ENCODE measurements at regions of chr2 and their contacts with region 1.

Region 1: DNA sequence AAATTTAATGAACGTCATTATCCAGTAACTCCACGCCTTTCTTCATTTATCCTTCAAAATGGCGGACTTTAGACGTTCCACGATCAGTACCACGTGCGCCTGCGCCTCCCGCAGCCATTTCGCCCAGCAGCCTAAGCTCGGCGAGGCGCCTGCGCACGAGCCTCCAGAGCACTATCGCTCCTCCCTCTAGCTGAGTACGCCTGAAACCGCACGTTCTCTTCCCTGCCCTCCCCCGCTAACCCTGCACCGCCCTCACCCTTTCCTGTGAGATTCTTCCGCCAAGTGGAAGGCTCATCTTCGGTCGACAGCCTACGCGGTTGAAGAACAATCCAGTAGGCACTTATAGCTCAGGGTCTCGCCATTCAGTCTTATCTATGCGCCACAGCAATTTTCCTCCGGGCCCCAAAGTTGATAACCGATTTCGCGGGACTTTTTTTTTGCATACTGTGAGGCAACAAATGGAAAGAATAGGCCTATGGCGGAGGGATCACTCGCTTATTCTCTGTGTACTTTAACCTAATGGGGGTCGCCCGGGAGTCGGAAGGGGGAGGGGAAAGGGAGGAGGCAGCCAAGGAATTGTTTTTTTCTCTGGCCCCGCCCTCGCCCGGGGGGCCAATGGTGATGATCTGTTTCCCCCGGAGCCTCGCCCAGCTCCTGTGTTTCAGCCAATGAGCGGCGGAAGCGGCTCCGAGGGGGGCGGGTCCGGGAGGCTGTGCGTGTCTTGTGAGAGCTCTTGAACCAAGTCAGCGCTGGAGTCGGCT is at the start of gene KDM3A:
- DNase-seq: peak; percentile 99 to 100 (median 99)
- H3K4me3 ChIP-seq: peak within 1 kb of the TSS; percentile 94 to 95
- H3K4me3 Mint-ChIP-seq: peak within 1 kb of the TSS; percentile 95 to 99 (median 98)
- H3K27ac ChIP-seq: peak within 1 kb of the TSS; percentile 83
- H3K27ac Mint-ChIP-seq: peak within 1 kb of the TSS; percentile 98 to 100 (median 99)
- H3K4me1 ChIP-seq: peaks cover 37% of the 10 kb centered on the region
- H3K4me1 Mint-ChIP-seq: peaks cover 37 to 51% (median 45%) of the 10 kb centered on the region in 4 donors
- H3K27me3 ChIP-seq: no peaks in the 10 kb centered on the region
- H3K27me3 Mint-ChIP-seq: peaks cover 2 to 9% of the 10 kb centered on the region in 2 donors
- total RNA-seq, gene KDM3A: 158 to 164 TPM

Region 2: DNA sequence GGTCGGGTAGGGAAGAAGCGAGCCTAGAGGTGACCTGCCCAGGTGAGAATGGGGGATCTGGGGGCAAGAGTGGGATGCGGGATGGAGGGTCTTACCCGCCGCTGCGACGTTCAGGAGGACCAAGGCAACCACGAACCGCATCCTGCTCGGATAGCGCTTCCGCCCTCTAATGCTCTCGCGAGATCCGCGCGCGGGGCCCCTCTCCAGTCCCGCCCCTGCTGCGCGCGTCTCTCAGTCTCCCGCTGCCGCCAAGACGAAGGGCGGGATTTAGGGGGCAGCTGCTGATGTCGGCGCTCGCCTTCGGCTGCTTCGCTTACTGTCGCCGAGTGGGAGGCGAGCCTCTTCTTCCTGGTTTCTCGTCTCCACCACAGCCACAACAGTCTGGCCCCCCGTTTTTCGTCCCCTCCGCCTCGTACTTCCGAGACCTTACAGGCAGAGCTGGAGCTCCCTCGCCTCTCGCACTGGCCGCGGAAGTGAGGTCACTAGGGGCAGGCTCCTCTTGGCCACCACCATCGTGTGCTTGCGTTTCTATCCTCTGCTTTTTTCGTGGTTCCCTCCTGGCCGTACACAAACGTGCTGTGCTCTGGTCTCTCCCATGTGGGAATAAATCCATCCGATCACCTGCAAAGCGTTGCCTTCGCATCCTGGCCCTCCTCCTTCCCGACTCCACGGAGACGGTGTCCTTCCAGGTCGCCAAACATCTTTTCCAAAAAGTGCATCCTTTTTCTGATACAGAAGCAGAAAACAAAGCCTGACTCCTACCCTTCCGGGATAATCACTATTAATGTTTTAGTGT is 1112.8 kb before region 1 on chr2 and contains the start of gene TGOLN2:
- CTCF ChIA-PET with region 1: no interaction called
- POLR2A ChIA-PET with region 1: interaction called, 11 read pairs
- intact Hi-C with region 1: loop called (anchors 2 kb)
- DNase-seq: peak; percentile 93 to 96 (median 95)
- H3K4me3 ChIP-seq: peak within 1 kb of the TSS; percentile 99 to 100
- H3K4me3 Mint-ChIP-seq: peak within 1 kb of the TSS; percentile 92 to 100 (median 98)
- H3K27ac ChIP-seq: peak within 1 kb of the TSS; percentile 98
- H3K27ac Mint-ChIP-seq: peak within 1 kb of the TSS; percentile 97 to 100 (median 100)
- H3K4me1 ChIP-seq: peaks cover 44% of the 10 kb centered on the region
- H3K4me1 Mint-ChIP-seq: peaks cover 21 to 65% (median 34%) of the 10 kb centered on the region in 4 donors
- H3K27me3 ChIP-seq: no peaks in the 10 kb centered on the region
- H3K27me3 Mint-ChIP-seq: no peaks in the 10 kb centered on the region
- total RNA-seq, gene TGOLN2: 188 to 195 TPM

Region 3: DNA sequence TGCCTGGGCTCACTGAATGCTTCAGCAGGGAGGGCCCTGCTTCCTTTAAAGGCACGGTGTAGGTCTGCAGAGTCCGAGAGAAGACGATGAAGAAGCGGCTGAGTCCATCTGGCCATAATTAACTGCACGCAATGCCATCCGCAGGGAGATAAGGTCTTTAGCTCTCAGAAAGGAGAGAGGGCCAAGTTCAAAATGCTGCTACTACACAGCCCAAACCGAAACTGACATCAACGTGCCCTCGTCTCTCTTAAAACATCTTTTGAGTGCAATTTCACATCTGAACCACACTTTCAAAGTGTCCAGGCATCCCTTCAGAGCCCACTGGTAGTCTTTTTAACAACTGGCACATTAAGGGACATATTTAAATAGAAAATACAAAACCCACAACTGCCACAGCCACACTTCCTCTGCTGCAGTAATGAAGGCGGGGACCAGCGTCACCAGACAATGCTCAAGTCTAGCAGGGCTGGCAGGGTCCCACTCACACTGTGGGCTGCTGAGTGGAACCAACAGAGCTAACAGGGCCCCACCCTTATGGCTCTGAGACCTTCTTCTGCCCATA is 587.8 kb before region 1 on chr2:
- CTCF ChIA-PET with region 1: no interaction called
- POLR2A ChIA-PET with region 1: interaction called, 21 read pairs
- intact Hi-C with region 1: no loop called
- DNase-seq: peak; percentile 73 to 88 (median 74)
- H3K4me3 ChIP-seq: peak overlapping the region; percentile 34 to 48
- H3K4me3 Mint-ChIP-seq: peak overlapping the region; percentile 82 to 92 (median 86)
- H3K27ac ChIP-seq: peak overlapping the region; percentile 84
- H3K27ac Mint-ChIP-seq: peak overlapping the region; percentile 98 to 100 (median 100)
- H3K4me1 ChIP-seq: peaks cover 81% of the 10 kb centered on the region
- H3K4me1 Mint-ChIP-seq: peaks cover 67 to 87% (median 76%) of the 10 kb centered on the region in 4 donors
- H3K27me3 ChIP-seq: no peaks in the 10 kb centered on the region
- H3K27me3 Mint-ChIP-seq: no peaks in the 10 kb centered on the region

Region 4: DNA sequence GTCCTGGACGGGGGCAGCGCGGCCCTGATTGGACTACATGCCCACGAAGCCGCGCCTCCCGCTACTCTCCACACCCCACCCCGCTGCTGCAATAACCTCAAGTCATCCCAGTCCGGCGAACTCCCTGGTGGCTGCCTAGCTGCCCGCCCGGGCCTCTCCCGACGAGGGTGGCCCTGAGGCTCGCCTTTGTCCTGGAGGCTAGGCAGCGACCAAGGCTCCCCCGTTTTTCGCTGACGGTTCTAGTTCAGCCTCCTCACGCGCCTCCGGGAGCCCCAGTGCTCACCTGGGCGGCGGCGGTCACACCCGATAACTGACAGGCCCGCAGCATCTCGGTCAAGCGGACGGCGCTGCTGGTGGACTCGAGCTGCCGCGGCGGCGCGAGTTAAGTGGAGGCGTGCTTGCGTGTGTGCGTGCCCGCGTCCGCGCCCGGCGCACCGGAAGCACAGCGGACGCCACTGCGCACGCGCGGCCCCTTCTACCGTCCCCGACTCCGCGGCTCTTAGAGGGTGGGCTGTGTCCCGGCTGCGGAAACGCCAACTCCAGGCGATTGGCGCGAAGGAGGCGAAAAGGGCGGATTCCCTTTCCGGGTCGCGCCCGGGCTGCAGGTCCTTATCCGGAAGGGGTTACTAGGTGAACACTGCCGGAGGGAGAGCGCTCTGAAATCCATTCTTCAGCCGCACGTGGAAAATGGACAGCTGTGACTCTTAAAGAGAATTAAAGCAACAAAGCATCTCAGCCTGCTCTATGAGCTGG is 245.6 kb before region 1 on chr2 and contains the start of gene IMMT:
- CTCF ChIA-PET with region 1: no interaction called
- POLR2A ChIA-PET with region 1: interaction called, 42 read pairs
- intact Hi-C with region 1: loop called (anchors 1 kb)
- DNase-seq: peak; percentile 92 to 95 (median 95)
- H3K4me3 ChIP-seq: peak within 1 kb of the TSS; percentile 27 to 100
- H3K4me3 Mint-ChIP-seq: peak within 1 kb of the TSS; percentile 90 to 97 (median 96)
- H3K27ac ChIP-seq: peak within 1 kb of the TSS; percentile 89
- H3K27ac Mint-ChIP-seq: peak within 1 kb of the TSS; percentile 83 to 98 (median 96)
- H3K4me1 ChIP-seq: peaks cover 57% of the 10 kb centered on the region
- H3K4me1 Mint-ChIP-seq: peaks cover 34 to 75% (median 55%) of the 10 kb centered on the region in 4 donors
- H3K27me3 ChIP-seq: no peaks in the 10 kb centered on the region
- H3K27me3 Mint-ChIP-seq: no peaks in the 10 kb centered on the region
- total RNA-seq, gene IMMT: 77.2 to 82.7 TPM

Region 5: DNA sequence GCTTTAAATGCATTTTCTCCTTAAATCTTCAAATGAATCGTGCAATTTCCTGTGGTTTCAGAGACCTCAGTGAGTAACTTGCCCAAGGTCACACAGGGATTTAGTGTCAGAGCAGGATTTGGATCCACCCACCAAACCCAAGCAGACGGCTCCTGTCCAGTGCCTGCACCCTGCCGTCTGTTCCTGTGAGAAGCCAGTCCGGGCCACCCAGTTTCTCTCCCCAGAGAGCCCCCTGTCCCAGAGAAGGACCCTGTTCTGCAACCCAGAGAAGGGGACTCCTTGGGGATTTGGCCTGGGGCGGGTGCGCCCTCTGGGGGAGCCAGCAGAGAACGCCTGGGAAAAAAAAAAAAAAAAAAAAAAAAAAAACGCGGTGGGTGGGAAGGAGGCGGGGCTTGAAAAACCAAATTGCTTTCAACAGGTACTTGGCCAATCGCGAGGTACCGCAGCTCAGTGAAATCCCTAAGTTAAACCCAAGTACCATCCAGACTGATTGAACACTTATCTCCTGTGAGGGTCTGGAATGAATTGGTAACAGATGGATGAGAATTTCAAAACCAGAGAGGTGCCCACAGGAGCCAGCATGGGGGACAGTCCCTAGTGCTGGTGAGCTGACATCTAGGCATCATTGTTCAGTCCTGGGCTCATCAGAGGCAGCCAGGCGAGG is 72.5 kb before region 1 on chr2:
- CTCF ChIA-PET with region 1: interaction called, 10 read pairs
- POLR2A ChIA-PET with region 1: interaction called, 50 read pairs
- intact Hi-C with region 1: loop called (anchors 1 kb)
- DNase-seq: peak; percentile 33 to 39 (median 37)
- H3K4me3 ChIP-seq: peak overlapping the region in 1 of 2 donors; percentile 35
- H3K4me3 Mint-ChIP-seq: peak overlapping the region; percentile 37 to 76 (median 72)
- H3K27ac ChIP-seq: no peak overlapping the region
- H3K27ac Mint-ChIP-seq: peak overlapping the region in 6 of 7 donors; percentile 14 to 75 (median 31)
- H3K4me1 ChIP-seq: peaks cover 35% of the 10 kb centered on the region
- H3K4me1 Mint-ChIP-seq: peaks cover 26 to 58% (median 45%) of the 10 kb centered on the region in 4 donors
- H3K27me3 ChIP-seq: no peaks in the 10 kb centered on the region
- H3K27me3 Mint-ChIP-seq: no peaks in the 10 kb centered on the region

Region 6: DNA sequence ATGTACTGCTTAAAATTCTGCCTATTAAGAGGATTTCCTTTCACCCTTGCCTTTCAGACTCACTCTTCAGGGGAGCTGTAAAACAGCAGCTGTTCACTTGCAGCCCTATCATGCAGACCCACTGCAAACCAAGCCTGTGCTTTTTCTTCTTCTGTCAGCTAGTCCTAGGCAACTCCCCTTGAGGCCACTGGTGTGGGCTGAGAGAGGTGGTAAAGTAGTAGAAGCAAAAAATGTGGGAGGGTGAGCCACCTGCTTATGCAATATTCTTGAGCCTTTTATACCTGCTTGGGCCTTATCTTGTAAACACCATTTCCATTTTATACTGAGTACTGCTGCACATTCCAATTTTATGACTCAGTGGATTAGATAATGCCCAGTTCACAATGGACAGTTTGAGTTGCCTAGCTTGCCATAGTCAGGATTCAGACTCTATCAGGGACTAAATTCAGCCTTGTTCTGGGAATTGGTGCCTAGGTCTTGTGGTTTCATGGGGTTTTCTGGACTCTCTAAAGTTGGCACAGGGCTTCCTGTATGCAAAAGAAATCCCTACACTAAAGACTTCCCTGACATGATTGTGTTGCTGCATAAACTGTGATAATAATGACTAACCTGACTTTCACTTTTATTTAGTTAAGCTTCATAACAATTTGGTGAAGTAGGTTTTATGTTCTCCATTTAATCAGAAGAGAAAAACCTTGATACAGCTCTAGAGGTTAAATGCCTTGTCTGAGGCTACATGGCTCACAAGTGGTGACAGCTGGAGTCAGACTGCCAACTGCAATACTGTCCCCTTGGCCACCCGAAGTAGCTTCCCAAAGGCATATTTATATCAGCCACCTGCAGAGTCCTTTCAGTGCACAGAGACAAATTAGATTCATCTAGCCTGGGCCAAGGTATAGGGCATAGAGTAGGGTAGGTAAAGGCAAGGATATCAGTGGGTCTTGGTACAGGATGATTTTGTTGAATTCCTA is 47.0 kb before region 1 on chr2:
- CTCF ChIA-PET with region 1: no interaction called
- POLR2A ChIA-PET with region 1: no interaction called
- intact Hi-C with region 1: no loop called
- DNase-seq: no peak
- H3K4me3 ChIP-seq: no peak overlapping the region
- H3K4me3 Mint-ChIP-seq: no peak overlapping the region
- H3K27ac ChIP-seq: no peak overlapping the region
- H3K27ac Mint-ChIP-seq: no peak overlapping the region
- H3K4me1 ChIP-seq: no peaks in the 10 kb centered on the region
- H3K4me1 Mint-ChIP-seq: no peaks in the 10 kb centered on the region
- H3K27me3 ChIP-seq: no peaks in the 10 kb centered on the region
- H3K27me3 Mint-ChIP-seq: peaks cover 17 to 21% of the 10 kb centered on the region in 2 donors

Region 7: DNA sequence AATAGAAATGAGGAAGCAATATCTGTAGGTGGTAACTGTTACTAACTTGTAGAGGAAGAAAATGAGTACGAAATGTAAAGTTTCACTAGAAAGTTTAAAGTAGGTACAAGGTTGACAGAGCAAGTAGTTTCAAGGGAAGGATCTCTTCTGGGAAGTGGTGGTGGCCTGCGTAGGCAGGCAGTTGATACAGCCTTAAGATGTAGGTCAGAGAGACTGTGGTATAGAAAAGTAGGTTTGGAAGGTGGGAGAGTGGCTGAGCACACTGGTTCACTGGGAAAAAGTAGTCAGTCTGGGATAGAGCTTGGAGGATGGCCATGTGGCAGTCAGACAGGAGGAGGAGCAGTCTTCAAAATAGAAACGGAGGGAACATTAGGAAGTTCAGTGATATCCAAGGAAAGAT is 23.8 kb after region 1 on chr2:
- CTCF ChIA-PET with region 1: interaction called, 11 read pairs
- POLR2A ChIA-PET with region 1: interaction called, 62 read pairs
- intact Hi-C with region 1: loop called (anchors 2 kb)
- DNase-seq: no peak
- H3K4me3 ChIP-seq: no peak overlapping the region
- H3K4me3 Mint-ChIP-seq: peak overlapping the region in 1 of 8 donors; percentile 38
- H3K27ac ChIP-seq: no peak overlapping the region
- H3K27ac Mint-ChIP-seq: peak overlapping the region; percentile 7 to 93 (median 72)
- H3K4me1 ChIP-seq: peaks cover 45% of the 10 kb centered on the region
- H3K4me1 Mint-ChIP-seq: peaks cover 40 to 59% (median 49%) of the 10 kb centered on the region in 4 donors
- H3K27me3 ChIP-seq: no peaks in the 10 kb centered on the region
- H3K27me3 Mint-ChIP-seq: no peaks in the 10 kb centered on the region

Region 8: GRCh38 chr2:86543335-86543734 is 102.5 kb after region 1 on chr2:
- CTCF ChIA-PET with region 1: no interaction called
- POLR2A ChIA-PET with region 1: no interaction called
- intact Hi-C with region 1: no loop called
- DNase-seq: no peak
- H3K4me3 ChIP-seq: no peak overlapping the region
- H3K4me3 Mint-ChIP-seq: no peak overlapping the region
- H3K27ac ChIP-seq: no peak overlapping the region
- H3K27ac Mint-ChIP-seq: no peak overlapping the region
- H3K4me1 ChIP-seq: no peaks in the 10 kb centered on the region
- H3K4me1 Mint-ChIP-seq: peaks cover 6 to 20% (median 9%) of the 10 kb centered on the region in 4 donors
- H3K27me3 ChIP-seq: no peaks in the 10 kb centered on the region
- H3K27me3 Mint-ChIP-seq: no peaks in the 10 kb centered on the region

Region 9: DNA sequence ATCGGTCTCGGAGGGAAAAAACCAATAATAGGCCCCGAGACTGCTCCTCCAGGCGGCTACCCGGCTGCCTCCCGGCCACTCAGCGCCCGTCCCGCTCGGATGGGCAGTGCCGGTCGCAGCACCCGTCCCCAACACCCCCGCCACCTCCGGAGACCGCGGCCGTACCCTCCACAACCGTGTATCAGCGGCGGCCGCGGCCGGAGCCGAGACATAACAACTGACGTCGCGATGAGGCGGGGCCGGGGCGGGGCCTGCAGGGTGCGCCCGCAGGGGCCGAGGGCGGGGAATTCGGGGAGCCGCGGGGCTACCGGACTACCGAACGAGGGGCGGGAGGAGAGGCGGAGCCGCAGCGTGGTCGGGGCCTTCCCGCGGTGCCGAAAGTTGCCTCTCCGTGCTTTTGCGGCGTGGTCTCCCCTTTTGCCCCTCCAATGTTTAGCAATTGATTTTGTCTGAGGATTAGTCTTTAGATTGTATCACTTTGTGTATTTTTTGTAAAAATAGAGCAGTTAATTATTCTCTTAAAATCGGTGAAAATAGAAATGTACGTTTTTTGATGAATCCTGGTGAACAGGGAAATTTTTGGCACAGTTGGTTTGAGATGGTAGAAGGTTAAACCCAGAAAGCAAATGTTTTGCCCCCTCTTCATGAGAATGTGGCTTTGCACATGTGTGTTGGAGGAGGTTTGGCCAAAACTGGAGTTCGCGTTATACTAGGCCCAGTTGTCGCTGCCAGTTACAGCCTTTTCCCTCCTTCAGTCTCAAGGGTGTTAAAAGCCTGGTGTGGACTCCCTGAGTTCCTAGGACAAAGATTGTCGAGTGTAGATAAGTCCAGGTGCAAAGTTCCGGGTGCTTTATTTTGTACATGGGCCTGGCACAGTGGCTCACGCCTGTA is 183.1 kb after region 1 on chr2 and contains the start of gene RNF103:
- CTCF ChIA-PET with region 1: interaction called, 4 read pairs
- POLR2A ChIA-PET with region 1: interaction called, 36 read pairs
- intact Hi-C with region 1: loop called (anchors 2 kb)
- DNase-seq: peak; percentile 88 to 91 (median 89)
- H3K4me3 ChIP-seq: peak within 1 kb of the TSS; percentile 58 to 59
- H3K4me3 Mint-ChIP-seq: peak within 1 kb of the TSS; percentile 94 to 98 (median 95)
- H3K27ac ChIP-seq: peak within 1 kb of the TSS; percentile 92
- H3K27ac Mint-ChIP-seq: peak within 1 kb of the TSS; percentile 88 to 99 (median 95)
- H3K4me1 ChIP-seq: peaks cover 35% of the 10 kb centered on the region
- H3K4me1 Mint-ChIP-seq: peaks cover 25 to 42% (median 32%) of the 10 kb centered on the region in 4 donors
- H3K27me3 ChIP-seq: no peaks in the 10 kb centered on the region
- H3K27me3 Mint-ChIP-seq: peaks cover 0 to 3% of the 10 kb centered on the region in 2 donors
- total RNA-seq, gene RNF103: 33.7 to 35.0 TPM

Measured in CD4-positive, alpha-beta memory T cell (primary cell).